Panc1 (cell line): ENCODE measurements at regions of chr1 and their contacts with region 1.

Region 1: GRCh38 chr1:38565020-38565491 is 294.5 kb downstream of the RRAGC start:
- DNase-seq: no peak
- ATAC-seq: no peak
- H3K4me3 ChIP-seq: no peak overlapping the region
- H3K27ac ChIP-seq: no peak overlapping the region
- H3K4me1 ChIP-seq: no peaks in the 10 kb centered on the region
- H3K27me3 ChIP-seq: no peaks in the 10 kb centered on the region; the same call in 1 of the 2 replicates
- CTCF ChIP-seq: no peak

Region 2: DNA sequence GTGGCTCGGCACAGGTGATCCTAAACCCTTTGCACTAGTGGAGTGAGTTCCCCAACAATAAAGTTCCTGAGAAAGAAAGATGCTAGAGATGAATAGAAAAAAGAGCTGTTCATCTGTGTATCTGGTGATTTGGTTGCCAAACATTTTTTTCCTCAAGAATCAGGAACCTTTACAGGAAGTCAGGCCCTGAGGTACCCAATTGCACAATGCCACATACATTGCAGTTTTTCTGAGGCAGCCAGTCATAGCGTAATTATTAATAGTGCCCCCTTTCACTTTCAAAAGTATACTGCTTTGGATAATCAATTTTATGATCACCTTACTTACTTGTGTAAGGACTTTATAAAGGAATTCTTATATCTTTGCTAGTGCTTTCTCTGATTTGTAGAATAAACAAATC is 172.2 kb before region 1 on chr1:
- CTCF ChIA-PET with region 1: no interaction called
- POLR2A ChIA-PET with region 1: interaction called, 10 read pairs
- in situ Hi-C with region 1: no loop called
- intact Hi-C with region 1: no loop called
- DNase-seq: no peak
- ATAC-seq: no peak
- H3K4me3 ChIP-seq: no peak overlapping the region
- H3K27ac ChIP-seq: no peak overlapping the region
- H3K4me1 ChIP-seq: no peaks in the 10 kb centered on the region
- H3K27me3 ChIP-seq: peaks cover 11% of the 10 kb centered on the region
- CTCF ChIP-seq: no peak

Region 3: DNA sequence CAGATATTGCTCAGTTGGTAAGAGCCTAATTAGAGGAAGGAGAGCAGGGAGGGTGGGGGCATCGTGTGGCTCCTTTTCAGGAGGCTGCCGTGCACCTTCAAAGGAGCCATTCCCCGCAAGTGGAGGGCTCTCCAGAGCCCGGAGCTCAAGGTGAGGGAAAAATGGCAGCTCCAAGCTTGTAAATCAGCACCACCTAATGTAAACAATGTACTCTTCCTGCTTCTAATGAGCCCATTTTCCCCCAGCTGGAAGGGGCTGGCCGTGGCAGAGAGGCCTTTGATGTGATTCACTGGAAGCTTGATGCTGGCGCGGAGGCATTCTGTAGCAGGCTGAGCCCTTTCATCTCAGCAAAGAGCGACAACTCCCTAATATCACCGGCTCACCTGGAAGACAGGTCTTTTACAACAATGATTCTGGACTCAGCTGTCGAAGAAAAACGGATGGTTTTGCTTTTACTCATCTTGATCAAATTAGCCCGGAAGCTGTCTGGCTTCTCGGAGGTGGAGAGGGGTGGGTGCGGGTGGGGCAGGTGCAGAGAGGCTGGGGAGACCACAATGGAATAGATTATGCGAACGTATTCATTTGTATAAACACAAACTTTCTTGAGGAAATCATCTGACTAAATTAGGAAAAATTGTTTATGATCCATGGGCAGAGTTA is 182.0 kb after region 1 on chr1:
- CTCF ChIA-PET with region 1: no interaction called
- POLR2A ChIA-PET with region 1: interaction called, 12 read pairs
- in situ Hi-C with region 1: no loop called
- intact Hi-C with region 1: no loop called
- DNase-seq: no peak
- ATAC-seq: no peak
- H3K4me3 ChIP-seq: no peak overlapping the region
- H3K27ac ChIP-seq: no peak overlapping the region
- H3K4me1 ChIP-seq: no peaks in the 10 kb centered on the region
- H3K27me3 ChIP-seq: peaks cover 10% of the 10 kb centered on the region
- CTCF ChIP-seq: no peak